ENCODE measurements at regions of chr13 and their contacts with region 1.

Region 1: GRCh38 chr13:40446365-40446764 is 220.1 kb downstream of the FOXO1 start:
- DNase-seq: no peak
- H3K4me3 ChIP-seq: no peak overlapping the region
- H3K27ac ChIP-seq: no peak overlapping the region
- H3K4me1 ChIP-seq: peaks cover 14% of the 10 kb centered on the region
- H3K27me3 ChIP-seq: no peaks in the 10 kb centered on the region
- CTCF ChIP-seq: no peak

Region 2: DNA sequence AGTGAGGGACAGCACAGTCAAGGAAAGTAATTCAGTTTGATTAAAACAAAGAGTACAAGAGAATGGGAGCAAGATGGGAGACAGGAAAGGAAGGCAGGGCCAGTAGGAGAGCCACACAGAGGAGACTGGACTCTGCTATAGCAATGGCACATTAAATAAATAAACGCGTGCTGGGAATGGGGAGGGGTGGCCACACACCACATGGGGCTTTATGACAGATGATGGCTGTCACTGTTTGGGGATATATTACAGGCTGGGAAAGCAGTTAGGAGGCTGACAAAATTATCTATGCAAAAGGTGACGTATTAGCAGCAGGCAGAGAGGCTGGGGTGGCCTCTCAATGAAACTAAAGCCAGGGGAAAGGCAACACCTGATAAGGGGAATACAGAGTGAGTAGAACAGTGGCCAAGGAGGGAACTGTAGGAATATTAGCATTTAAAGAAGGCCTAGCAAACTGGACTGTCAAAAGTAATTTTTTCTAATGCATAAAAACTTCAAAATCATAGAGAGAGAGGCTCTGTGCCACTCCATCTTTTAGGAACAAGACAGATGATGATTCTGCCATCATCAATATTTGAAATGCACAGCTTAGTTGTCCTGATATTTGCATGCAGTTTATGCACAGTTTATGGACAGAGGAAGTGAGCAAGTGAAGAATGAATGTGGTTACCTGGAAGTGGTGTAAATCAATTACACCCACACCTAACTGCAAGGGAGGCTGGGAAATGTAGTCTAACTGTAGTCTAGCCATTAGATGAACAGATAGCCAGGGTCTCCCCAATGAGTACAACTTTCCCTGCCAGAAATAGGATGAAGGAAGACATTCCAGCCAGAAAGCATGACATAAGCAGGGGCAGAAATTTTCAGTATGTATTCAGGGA is 126.4 kb before region 1 on chr13:
- CTCF ChIA-PET with region 1: interaction called, 17 read pairs
- dilution Hi-C with region 1: no loop called
- in situ Hi-C with region 1: no loop called
- intact Hi-C with region 1: no loop called
- DNase-seq: peak; percentile 30
- H3K4me3 ChIP-seq: no peak overlapping the region
- H3K27ac ChIP-seq: no peak overlapping the region
- H3K4me1 ChIP-seq: no peaks in the 10 kb centered on the region
- H3K27me3 ChIP-seq: no peaks in the 10 kb centered on the region
- CTCF ChIP-seq: no peak

Measured in mammary epithelial cell (primary cell).